ENCODE measurements at regions of chr5 and their contacts with region 1.

Region 1: DNA sequence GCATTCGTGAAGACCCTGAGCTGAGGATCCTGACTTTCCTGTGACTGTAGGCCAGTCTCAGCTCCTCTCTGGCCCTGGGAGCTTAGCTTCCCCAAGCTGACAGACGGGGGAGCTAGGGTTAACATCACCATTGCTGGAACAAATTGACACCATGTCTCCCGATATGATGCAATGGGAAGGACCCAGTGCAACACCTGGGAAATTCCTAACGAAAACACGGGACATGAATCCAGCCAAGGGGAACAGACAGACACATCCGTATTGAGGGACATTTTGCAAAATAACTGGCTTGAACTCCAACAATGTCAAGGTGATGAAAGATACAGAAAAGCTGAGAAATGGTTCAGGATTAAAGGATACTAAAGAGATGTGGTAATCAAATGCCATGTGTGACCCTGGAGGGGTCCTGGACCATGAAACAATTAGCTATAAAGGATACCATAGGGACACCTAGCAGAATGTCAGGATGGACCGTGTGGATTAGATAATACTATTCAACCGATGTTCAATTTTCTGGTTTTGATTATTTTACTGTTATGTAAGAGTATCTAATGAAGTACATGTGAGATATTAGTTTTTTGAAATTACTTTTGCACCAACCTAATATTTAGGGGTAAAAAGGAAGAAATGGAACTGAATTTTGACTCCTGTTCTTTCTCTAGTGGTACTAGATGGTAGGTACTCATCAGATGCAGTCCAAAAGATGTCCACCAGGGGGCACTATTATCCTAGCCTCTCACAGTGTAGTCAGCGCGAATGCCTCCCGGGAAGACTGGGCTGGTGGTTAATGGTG is 52.7 kb downstream of the NDST1 start:
- DNase-seq: peak in 1 of 2 donors; percentile 85
- ATAC-seq: peak; percentile 92
- H3K4me3 ChIP-seq: no peak overlapping the region
- H3K27ac ChIP-seq: no peak overlapping the region
- H3K4me1 ChIP-seq: no peaks in the 10 kb centered on the region
- H3K27me3 ChIP-seq: no peaks in the 10 kb centered on the region

Region 2: DNA sequence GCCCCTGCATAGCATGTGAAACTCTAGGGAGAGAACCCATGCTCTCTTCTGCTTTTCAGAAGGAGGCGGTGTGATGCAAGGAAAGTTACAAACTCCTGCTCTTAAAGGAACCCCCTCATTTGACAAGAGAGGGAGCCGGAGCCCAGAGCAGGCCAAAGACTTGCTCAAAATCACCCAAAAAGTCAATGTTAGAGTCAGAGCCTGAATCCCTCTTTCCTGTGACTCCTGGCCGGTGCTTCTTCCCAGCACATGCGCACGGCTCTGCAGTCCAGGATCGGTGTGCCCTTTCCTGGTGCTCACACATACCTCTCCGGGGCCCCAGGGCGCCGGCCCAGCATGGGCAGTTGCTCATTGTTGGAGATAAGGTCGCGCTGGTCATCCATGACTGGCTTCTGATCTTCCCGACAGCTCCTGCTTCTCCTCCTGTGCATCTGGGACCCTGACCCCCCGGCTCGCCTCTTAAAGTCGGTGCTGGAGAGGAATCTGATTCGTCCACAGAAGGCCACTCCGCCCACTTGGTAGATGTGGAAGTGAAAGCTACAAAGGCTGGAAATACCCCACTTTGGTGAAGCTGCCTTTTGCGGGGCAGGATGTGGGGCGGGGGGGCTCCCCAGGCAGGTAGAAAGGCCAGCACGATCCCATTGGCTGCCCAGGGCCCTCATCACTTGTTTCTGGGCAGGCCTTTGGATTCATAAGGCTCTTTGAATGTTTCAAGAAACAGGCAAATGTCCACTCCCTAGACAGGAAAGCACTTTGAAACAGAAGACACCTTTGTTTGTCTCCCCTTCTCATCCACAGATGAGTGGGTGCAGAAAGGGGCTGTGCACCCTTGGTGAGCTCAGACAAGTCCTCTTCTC is 148.1 kb before region 1 on chr5 and contains the start of gene CD74:
- intact Hi-C with region 1: no loop called
- DNase-seq: peak; percentile 91 to 94
- ATAC-seq: peak; percentile 80
- H3K4me3 ChIP-seq: peak within 1 kb of the TSS in 1 of 2 donors; percentile 28
- H3K27ac ChIP-seq: peak within 1 kb of the TSS in 1 of 2 donors; percentile 82
- H3K4me1 ChIP-seq: no peaks in the 10 kb centered on the region
- H3K27me3 ChIP-seq: no peaks in the 10 kb centered on the region
- total RNA-seq, gene CD74: 677 to 1,639 TPM

Region 3: GRCh38 chr5:150487199-150488061 is 73.2 kb before region 1 on chr5:
- intact Hi-C with region 1: no loop called
- DNase-seq: peak in 1 of 2 donors; percentile 56
- ATAC-seq: no peak
- H3K4me3 ChIP-seq: peak overlapping the region; percentile 70 to 92
- H3K27ac ChIP-seq: peak overlapping the region; percentile 62 to 99
- H3K4me1 ChIP-seq: peaks cover 12 to 25% of the 10 kb centered on the region in 2 donors
- H3K27me3 ChIP-seq: no peaks in the 10 kb centered on the region

Region 4: DNA sequence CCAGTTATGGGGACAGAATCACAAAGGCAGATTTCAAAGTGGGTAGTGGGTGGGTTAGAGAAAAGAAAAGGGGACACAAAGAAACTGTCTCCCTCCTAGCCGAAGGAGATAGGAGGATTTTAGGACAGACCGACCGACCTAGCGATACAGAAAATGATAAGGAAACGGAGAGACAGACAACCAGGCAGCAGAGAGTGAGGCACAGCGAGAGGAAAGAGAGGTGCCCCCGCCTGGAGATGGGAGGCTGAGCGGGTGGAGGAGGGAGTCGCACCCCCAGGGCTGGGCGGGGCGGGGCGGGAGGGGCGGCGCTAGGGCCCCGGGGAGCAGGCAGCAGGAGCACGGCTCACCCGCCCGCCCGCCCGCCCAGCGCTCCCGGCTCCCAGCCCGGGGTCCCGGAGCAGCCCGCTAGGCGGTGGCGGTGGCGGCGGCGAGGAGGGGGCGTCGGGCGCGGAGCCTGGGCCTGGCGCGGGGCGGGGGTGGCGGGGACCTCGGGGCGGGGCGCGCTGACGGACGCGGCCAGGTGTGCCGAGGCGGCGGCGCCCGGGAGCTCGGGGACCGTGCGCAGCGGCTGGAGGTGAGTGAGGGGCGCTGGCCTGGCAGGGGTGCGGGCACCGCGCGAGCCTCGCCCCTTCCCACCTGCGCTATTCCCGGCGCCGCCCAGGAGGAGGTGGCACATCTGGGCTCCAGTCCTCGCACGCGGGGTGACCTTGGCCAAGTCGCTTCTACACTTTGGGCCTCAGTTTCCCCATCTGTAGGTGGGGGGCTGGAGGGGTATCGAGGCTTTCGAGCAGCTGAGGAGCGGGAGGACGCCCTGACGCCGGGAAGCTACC is 64.0 kb after region 1 on chr5:
- intact Hi-C with region 1: loop called in 1 of 2 experiments (anchors 5 kb)
- DNase-seq: no peak
- ATAC-seq: peak; percentile 9
- H3K4me3 ChIP-seq: peak overlapping the region; percentile 83 to 90
- H3K27ac ChIP-seq: peak overlapping the region; percentile 80 to 99
- H3K4me1 ChIP-seq: no peaks in the 10 kb centered on the region
- H3K27me3 ChIP-seq: no peaks in the 10 kb centered on the region

Region 5: GRCh38 chr5:150656191-150657132 is 95.9 kb after region 1 on chr5:
- intact Hi-C with region 1: loop called (anchors 2 kb)
- DNase-seq: peak; percentile 81 to 93
- ATAC-seq: peak; percentile 60
- H3K4me3 ChIP-seq: no peak overlapping the region
- H3K27ac ChIP-seq: peak overlapping the region; percentile 18 to 82
- H3K4me1 ChIP-seq: no peaks in the 10 kb centered on the region
- H3K27me3 ChIP-seq: no peaks in the 10 kb centered on the region

Region 6: DNA sequence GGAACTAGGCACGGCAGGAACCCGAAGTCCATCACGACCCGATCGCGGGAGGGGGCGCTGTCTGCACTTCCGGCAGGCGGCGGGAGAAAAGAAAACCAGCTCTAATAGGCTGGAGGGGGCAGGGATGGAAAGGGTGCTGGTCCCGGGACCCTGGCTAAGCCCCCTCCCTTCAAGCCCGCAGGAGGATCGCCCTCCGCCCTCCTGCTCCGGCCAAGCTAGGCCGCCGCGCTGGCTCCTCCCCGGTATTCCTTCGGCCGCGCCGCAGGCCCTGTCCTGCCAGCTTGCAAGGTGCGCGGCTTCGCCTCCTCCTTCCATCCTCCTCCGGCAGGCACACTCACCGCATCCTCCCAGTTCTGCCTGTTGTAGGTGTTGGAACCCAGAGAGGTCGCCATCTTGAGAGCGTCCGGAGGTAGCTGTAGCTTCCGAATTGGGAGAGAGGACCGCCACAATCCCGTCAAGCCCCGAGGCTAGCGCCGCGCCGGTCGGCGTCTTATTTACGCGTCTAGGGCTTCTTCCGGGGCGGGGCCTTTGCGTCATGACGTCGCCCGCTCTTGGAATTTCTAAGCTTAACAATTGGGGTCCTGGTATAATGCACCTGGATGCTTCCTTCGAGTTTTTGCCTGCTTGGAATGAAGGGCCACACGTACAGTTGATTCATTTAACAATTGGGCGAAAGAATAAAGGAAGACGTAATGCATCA is 140.1 kb after region 1 on chr5 and contains the start of gene RBM22:
- intact Hi-C with region 1: loop called (anchors 5 kb)
- DNase-seq: peak; percentile 96 to 97
- ATAC-seq: peak; percentile 99
- H3K4me3 ChIP-seq: peak within 1 kb of the TSS; percentile 68 to 94
- H3K27ac ChIP-seq: peak within 1 kb of the TSS; percentile 57 to 93
- H3K4me1 ChIP-seq: peaks cover 0 to 3% of the 10 kb centered on the region in 2 donors
- H3K27me3 ChIP-seq: no peaks in the 10 kb centered on the region
- total RNA-seq, gene RBM22: 40.1 to 46.9 TPM

Region 7: GRCh38 chr5:150846654-150847333 is 286.2 kb after region 1 on chr5:
- intact Hi-C with region 1: loop called in 1 of 2 experiments (anchors 2 kb)
- DNase-seq: peak in 1 of 2 donors; percentile 51
- ATAC-seq: peak; percentile 88
- H3K4me3 ChIP-seq: no peak overlapping the region
- H3K27ac ChIP-seq: no peak overlapping the region
- H3K4me1 ChIP-seq: no peaks in the 10 kb centered on the region
- H3K27me3 ChIP-seq: no peaks in the 10 kb centered on the region